ENCODE measurements at regions of chr15 and their contacts with region 1.

Region 1: GRCh38 chr15:56245871-56246814 is 2.5 kb upstream of the RFX7 start:
- DNase-seq: peak; percentile 94
- H3K4me3 Mint-ChIP-seq: peak overlapping the region; percentile 79
- H3K27ac Mint-ChIP-seq: peak overlapping the region; percentile 90
- H3K4me1 Mint-ChIP-seq: peaks cover 16% of the 10 kb centered on the region
- H3K27me3 Mint-ChIP-seq: no peaks in the 10 kb centered on the region

Region 2: DNA sequence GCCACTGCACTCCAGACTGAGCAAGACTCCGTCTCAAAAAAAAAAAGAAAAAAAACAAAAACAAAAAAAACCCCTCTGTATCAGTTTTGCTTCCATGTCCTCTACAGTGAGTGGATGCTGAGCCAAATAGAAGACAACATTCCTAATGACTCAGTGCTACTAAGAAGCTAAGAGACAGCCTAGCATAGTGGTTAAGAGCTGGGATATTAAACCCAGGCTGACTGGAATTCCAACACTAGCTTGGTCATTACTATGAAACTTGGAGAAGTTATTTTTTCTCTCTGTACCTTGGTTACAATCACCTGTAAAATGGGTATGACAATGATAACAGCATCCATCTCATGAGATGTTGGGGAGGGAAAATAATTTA is 597.1 kb before region 1 on chr15:
- CTCF ChIA-PET with region 1: no interaction called
- intact Hi-C with region 1: loop called (anchors 1 kb)
- DNase-seq: no peak
- H3K4me3 Mint-ChIP-seq: no peak overlapping the region
- H3K27ac Mint-ChIP-seq: no peak overlapping the region
- H3K4me1 Mint-ChIP-seq: no peaks in the 10 kb centered on the region
- H3K27me3 Mint-ChIP-seq: no peaks in the 10 kb centered on the region

Region 3: DNA sequence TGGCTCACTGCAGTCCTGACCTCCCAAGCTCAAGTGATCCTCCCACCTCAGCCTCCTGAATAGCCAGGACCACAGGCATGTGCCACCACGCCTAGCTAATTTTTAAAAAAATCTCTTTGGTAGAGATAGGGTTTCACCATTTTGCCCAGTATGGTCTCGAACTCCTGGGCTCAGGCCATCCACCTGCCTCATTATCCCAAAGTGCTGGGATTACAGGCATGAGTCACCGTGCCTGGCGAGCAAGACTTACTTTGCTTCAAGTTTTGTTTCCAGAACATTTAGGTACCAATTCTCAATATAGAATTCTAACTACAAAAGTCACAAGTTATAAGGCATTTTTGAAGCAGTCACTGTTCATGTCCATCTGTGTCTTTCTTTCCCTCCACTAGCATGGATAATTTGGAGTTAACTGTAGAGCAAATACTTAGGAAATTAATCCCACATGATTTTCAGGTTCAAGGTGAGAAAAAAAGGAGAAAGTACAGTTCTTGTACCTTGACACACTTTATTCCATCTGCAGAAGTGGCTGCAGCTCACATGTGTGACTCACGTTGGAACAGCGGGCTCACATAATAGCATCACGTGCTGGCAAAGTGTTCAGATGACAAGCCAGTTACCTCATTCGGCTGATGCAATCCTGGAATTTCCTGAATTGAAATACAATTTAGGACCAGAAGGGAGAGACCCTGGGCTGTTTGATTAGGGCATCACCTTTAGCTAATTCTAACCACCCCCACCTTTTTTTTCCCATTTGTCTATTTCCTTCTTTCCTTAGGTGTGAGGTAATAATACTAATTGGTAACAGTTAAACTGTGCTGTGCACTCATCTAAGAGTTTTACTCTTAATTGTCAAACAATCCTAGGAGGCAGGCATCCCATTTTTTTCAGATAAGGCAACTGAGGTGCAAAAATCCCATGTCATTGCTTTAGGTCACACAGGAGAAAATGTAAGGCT is 205.8 kb before region 1 on chr15:
- CTCF ChIA-PET with region 1: no interaction called
- intact Hi-C with region 1: loop called (anchors 1 kb)
- DNase-seq: peak; percentile 73
- H3K4me3 Mint-ChIP-seq: no peak overlapping the region
- H3K27ac Mint-ChIP-seq: peak overlapping the region; percentile 79
- H3K4me1 Mint-ChIP-seq: peaks cover 64% of the 10 kb centered on the region
- H3K27me3 Mint-ChIP-seq: no peaks in the 10 kb centered on the region

Region 4: DNA sequence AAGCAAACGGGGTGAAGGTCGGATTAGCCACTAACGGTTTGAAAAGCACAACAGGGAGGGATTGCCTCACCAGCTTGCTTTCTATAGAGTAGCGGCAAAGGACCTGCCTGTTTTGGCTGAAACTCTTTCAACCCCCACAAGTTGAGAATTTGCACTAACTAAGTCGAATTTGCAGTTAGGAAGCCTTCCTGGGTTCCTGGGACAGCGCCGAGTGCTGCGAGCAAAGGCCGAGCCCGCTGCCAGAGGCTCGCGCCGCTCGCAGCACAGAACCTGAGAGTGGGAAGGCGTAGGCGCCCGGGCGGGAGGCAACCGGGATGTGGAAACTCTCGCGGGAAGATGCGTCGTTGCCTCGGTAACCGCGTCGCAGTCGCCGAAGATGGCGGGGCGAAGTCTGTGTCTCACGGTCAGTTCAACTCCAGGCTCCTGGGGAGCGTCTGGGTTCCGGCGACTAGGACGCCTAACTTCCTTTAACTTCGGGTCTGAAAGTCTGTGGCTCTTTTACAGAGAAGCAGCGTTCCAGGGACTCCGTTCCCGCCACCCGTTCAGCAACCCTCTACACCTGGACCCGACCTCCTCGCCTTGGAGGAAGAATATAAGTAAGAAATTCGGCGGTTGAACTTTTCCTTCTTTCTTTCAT is 119.0 kb after region 1 on chr15 and contains the start of gene TEX9:
- CTCF ChIA-PET with region 1: interaction called, 3 read pairs
- intact Hi-C with region 1: loop called (anchors 1 kb)
- DNase-seq: peak; percentile 86
- H3K4me3 Mint-ChIP-seq: peak within 1 kb of the TSS; percentile 75
- H3K27ac Mint-ChIP-seq: no peak within 1 kb of the TSS
- H3K4me1 Mint-ChIP-seq: peaks cover 9% of the 10 kb centered on the region
- H3K27me3 Mint-ChIP-seq: peaks cover 30% of the 10 kb centered on the region
- total RNA-seq, gene TEX9: 1.1 to 1.4 TPM

Region 5: GRCh38 chr15:56464893-56465520 is 218.9 kb after region 1 on chr15 and contains the start of gene MNS1:
- CTCF ChIA-PET with region 1: no interaction called
- intact Hi-C with region 1: loop called (anchors 1 kb)
- DNase-seq: peak; percentile 91
- H3K4me3 Mint-ChIP-seq: peak within 1 kb of the TSS; percentile 85
- H3K27ac Mint-ChIP-seq: no peak within 1 kb of the TSS
- H3K4me1 Mint-ChIP-seq: peaks cover 23% of the 10 kb centered on the region
- H3K27me3 Mint-ChIP-seq: peaks cover 18% of the 10 kb centered on the region
- total RNA-seq, gene MNS1: 0.57 to 0.67 TPM

Region 6: GRCh38 chr15:56869573-56869972 is 623.4 kb after region 1 on chr15:
- CTCF ChIA-PET with region 1: no interaction called
- intact Hi-C with region 1: loop called (anchors 5 kb)
- DNase-seq: peak; percentile 73
- H3K4me3 Mint-ChIP-seq: no peak overlapping the region
- H3K27ac Mint-ChIP-seq: no peak overlapping the region
- H3K4me1 Mint-ChIP-seq: no peaks in the 10 kb centered on the region
- H3K27me3 Mint-ChIP-seq: no peaks in the 10 kb centered on the region

Region 7: DNA sequence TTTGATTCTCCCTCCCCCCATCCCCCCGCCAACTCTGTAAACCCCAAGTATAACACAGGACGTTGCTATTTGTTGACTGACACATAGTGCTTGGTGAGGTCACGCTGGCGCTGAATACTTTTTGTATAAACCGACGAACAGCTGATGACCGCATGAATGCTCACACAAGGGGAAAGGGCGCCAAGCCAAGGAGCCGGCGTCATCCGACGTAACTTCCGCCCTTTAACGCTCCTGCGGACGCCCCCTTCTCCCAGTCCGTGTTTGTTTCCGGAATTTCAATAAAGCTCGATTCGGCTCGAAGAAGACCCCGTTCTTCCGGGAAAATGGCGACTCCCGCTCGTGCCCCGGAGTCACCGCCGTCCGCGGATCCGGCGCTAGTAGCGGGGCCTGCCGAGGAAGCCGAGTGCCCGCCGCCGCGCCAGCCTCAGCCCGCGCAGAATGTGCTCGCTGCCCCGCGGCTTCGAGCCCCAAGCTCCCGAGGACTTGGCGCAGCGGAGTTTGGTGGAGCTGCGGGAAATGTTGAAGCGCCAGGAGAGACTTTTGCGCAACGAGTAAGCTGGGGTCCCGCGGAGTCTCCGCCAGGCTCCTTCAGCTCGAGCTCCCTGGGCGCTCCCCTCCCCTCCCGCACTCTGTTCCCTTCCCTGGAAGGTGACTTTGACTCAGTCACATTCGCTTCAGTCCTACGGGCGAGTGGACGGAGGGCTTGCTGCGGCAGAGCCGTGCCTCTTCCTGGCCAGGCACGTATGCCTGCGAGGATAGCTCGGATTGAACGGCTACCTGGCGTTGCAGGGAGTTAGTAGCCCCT is 1460.5 kb after region 1 on chr15 and contains the start of gene POLR2M:
- CTCF ChIA-PET with region 1: no interaction called
- intact Hi-C with region 1: loop called (anchors 5 kb)
- DNase-seq: peak; percentile 98
- H3K4me3 Mint-ChIP-seq: peak within 1 kb of the TSS; percentile 90
- H3K27ac Mint-ChIP-seq: peak within 1 kb of the TSS; percentile 93
- H3K4me1 Mint-ChIP-seq: peaks cover 79% of the 10 kb centered on the region
- H3K27me3 Mint-ChIP-seq: no peaks in the 10 kb centered on the region
- total RNA-seq, gene POLR2M: 107 to 114 TPM

Measured in activated naive CD4-positive, alpha-beta T cell treated with anti-CD3 and anti-CD28 coated beads for 36 hours (primary cell).